ENCODE measurements at regions of chr22 and their contacts with region 1.

Region 1: GRCh38 chr22:17781319-17782031 is 7.2 kb upstream of the BID start:
- H3K4me3 Mint-ChIP-seq: peak overlapping the region; percentile 57
- H3K27ac Mint-ChIP-seq: peak overlapping the region; percentile 87
- H3K4me1 Mint-ChIP-seq: peaks cover 77% of the 10 kb centered on the region
- H3K27me3 Mint-ChIP-seq: no peaks in the 10 kb centered on the region

Region 2: DNA sequence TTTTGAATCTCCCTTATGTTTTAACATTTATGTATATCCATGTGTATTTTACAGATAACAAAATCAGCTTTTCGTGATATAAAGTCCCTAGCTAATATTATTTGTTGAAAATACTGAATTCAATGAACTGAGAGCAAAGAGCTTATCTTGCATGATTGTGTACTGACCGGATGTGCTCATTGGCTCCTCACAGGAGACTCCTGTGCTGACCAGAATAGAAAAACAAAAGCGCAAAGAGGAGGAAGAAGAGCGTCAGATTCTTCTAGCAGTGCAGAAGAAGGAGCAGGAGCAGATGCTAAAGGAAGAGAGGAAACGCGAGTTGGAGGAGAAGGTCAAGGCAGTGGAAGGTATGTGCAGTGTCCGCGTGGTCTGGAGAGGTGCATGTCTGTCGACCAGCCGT is 257.6 kb before region 1 on chr22:
- intact Hi-C with region 1: no loop called
- H3K4me3 Mint-ChIP-seq: no peak overlapping the region
- H3K27ac Mint-ChIP-seq: no peak overlapping the region
- H3K4me1 Mint-ChIP-seq: peaks cover 5% of the 10 kb centered on the region
- H3K27me3 Mint-ChIP-seq: peaks cover 9% of the 10 kb centered on the region

Region 3: DNA sequence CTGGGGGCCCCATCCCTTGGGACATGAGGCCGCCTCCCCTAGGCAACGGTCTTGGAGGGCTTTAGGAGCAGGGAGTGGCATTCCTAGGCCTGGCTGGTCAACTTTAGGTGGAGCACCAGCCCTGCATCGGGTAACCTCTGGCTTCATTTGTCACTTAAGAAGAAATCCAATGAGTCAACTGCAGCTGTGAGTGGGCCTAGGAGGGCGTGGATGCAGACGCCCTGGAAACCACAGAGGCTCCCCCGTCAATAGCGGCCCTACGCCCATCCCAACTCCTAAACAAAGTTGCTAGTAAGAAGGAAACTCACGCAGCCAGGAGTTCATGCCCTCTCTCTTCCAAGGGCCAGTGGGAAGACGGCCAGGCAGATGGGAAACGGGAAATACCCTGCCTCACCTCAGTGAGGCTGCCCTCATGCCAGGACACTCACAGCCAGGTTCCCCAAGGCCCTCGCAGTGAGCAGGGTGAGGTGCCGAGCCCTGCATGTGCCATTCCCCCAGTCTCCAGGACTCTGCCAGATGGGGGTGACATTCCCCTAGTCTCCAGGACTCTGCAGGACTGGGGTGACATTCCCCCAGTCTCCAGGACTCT is 28.0 kb before region 1 on chr22:
- intact Hi-C with region 1: loop called (anchors 2 kb)
- H3K4me3 Mint-ChIP-seq: no peak overlapping the region
- H3K27ac Mint-ChIP-seq: peak overlapping the region; percentile 78
- H3K4me1 Mint-ChIP-seq: peaks cover 72% of the 10 kb centered on the region
- H3K27me3 Mint-ChIP-seq: no peaks in the 10 kb centered on the region

Region 4: DNA sequence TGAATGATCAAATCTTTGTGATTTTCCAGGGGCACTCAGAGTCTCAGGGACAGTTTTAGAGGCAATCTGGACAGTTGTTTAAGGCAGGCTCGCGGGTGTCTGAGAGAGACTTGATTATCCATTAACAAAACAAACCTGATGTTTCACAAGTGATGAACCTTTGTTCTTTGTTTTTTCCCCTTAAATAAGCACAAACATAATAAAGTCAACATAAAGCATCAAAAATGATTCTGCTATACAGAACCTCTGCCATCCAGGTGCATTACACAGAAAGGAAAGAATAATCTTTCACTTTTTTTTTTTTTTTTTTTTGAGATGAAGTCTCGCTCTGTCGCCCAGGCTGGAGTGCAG is 20.4 kb before region 1 on chr22:
- intact Hi-C with region 1: loop called (anchors 2 kb)
- H3K4me3 Mint-ChIP-seq: peak overlapping the region; percentile 59
- H3K27ac Mint-ChIP-seq: peak overlapping the region; percentile 85
- H3K4me1 Mint-ChIP-seq: peaks cover 76% of the 10 kb centered on the region
- H3K27me3 Mint-ChIP-seq: no peaks in the 10 kb centered on the region

Region 5: DNA sequence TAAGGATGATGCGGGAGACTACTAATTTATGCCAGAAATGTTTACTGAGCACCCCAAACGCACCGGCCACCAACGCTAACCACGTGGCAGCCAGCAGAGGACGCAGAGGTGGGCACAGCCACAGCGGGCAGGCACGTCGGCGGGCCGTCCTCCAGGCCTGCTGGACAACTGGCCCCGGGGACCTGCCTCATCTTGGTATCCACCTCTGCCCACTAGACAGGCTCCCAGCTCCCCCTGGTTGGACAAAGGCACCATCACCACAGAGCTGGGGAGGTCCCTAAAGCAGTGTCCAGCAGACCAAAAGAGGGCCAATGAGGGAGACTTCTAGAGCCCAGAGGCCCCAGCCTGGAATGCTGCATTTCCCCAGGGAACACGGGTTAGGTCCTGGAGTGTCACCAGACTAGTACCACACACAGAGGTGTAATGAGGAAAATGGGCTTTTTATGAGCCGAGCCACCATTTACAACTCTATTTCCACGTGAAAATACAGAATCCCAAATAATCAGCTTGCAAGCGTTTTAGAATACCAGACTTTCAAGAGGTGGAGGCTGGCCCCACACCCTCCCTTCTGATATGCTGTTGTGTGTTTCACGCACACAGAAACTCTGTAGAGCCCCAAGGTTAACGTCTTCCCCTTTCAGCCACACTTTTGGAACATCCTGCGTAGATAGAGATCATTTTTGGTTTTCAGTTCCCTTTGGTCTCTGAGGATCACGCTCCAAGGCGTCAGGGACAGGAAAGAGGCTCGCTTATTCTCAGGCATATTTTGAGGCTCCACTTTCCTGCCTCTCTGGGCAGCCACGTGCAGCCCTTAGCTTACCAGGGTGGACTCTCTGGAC is 16.5 kb after region 1 on chr22:
- intact Hi-C with region 1: loop called (anchors 2 kb)
- H3K4me3 Mint-ChIP-seq: no peak overlapping the region
- H3K27ac Mint-ChIP-seq: peak overlapping the region; percentile 38
- H3K4me1 Mint-ChIP-seq: peaks cover 55% of the 10 kb centered on the region
- H3K27me3 Mint-ChIP-seq: peaks cover 11% of the 10 kb centered on the region